ENCODE measurements at regions of chr1 and their contacts with region 1.

Region 1: GRCh38 chr1:236762410-236762809 is 32.7 kb upstream of the MTR start:
- DNase-seq: no peak
- ATAC-seq: no peak

Region 2: GRCh38 chr1:236779312-236779711 is 16.9 kb after region 1 on chr1:
- intact Hi-C with region 1: no loop called
- DNase-seq: no peak
- ATAC-seq: no peak

Region 3: GRCh38 chr1:236868625-236869467 is 106.4 kb after region 1 on chr1:
- intact Hi-C with region 1: loop called (anchors 10 kb)
- DNase-seq: no peak
- ATAC-seq: peak; percentile 42

Measured in Right ventricle myocardium superior (tissue), 1 donor.